HepG2 (cell line): ENCODE measurements at regions of chr6 and their contacts with region 1.

Region 1: GRCh38 chr6:135300576-135300975 is 119.5 kb downstream of the MYB start:
- DNase-seq: no peak
- ATAC-seq: no peak
- H3K4me3 ChIP-seq: no peak overlapping the region
- H3K27ac ChIP-seq: no peak overlapping the region
- H3K4me1 ChIP-seq: no peaks in the 10 kb centered on the region
- H3K27me3 ChIP-seq: no peaks in the 10 kb centered on the region
- CTCF ChIP-seq: no peak
- EP300 ChIP-seq: no peak
- POLR2A ChIP-seq: no peak
- RAD21 ChIP-seq: no peak

Region 2: GRCh38 chr6:134830940-134831339 is 469.6 kb before region 1 on chr6:
- CTCF ChIA-PET with region 1: no interaction called
- POLR2A ChIA-PET with region 1: no interaction called
- in situ Hi-C with region 1: no loop called
- intact Hi-C with region 1: loop called (anchors 5 kb)
- DNase-seq: peak; percentile 13
- ATAC-seq: peak; percentile 81
- H3K4me3 ChIP-seq: no peak overlapping the region
- H3K27ac ChIP-seq: no peak overlapping the region
- H3K4me1 ChIP-seq: peaks cover 16% of the 10 kb centered on the region
- H3K27me3 ChIP-seq: no peaks in the 10 kb centered on the region
- CTCF ChIP-seq: no peak
- EP300 ChIP-seq: no peak
- POLR2A ChIP-seq: no peak
- RAD21 ChIP-seq: no peak

Region 3: DNA sequence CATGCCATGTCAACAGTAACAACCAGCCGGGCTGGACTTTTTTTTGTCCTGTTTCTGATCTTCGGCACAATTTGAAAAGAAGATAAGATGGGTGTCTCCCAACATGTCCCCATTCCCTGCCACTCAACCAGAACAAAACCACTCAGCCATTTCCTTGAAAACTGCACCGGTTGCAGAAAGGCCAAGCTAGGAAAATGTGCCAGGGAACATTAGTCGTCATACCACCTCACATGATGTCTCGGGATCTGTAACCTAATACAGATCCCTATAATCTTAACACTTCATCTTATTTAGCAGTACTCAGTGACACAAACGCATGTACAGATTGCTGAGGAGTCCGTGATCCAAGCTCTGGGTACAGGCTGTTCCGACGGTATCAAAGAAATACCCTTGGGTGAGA is 397.1 kb before region 1 on chr6:
- CTCF ChIA-PET with region 1: no interaction called
- POLR2A ChIA-PET with region 1: no interaction called
- in situ Hi-C with region 1: no loop called
- intact Hi-C with region 1: no loop called
- DNase-seq: no peak
- ATAC-seq: no peak
- H3K4me3 ChIP-seq: no peak overlapping the region
- H3K27ac ChIP-seq: no peak overlapping the region
- H3K4me1 ChIP-seq: no peaks in the 10 kb centered on the region
- H3K27me3 ChIP-seq: no peaks in the 10 kb centered on the region
- CTCF ChIP-seq: no peak
- EP300 ChIP-seq: no peak
- POLR2A ChIP-seq: no peak
- RAD21 ChIP-seq: no peak

Region 4: DNA sequence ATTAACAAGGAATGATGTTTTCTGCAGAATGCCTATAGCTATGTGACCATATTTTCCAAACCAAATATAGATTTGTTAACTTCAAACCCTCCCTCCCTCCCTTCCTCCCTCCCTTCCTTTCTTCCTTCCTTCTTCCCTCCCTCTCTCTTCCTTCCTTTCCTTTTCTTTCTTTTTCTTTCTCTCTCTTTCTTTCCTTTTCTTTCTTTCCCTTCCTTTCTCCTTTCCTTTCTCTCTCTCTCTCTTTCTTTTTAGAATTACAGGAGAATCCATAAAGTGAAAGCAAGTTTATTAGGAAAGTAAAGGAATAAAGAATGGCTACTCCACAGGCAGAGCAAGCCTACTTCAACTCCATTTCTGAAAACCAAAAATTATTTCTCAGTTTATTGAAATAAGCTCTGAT is 44.0 kb after region 1 on chr6:
- CTCF ChIA-PET with region 1: no interaction called
- POLR2A ChIA-PET with region 1: no interaction called
- in situ Hi-C with region 1: no loop called
- intact Hi-C with region 1: no loop called
- DNase-seq: no peak
- ATAC-seq: no peak
- H3K4me3 ChIP-seq: no peak overlapping the region
- H3K27ac ChIP-seq: no peak overlapping the region
- H3K4me1 ChIP-seq: no peaks in the 10 kb centered on the region
- H3K27me3 ChIP-seq: no peaks in the 10 kb centered on the region
- CTCF ChIP-seq: no peak
- EP300 ChIP-seq: no peak
- POLR2A ChIP-seq: no peak
- RAD21 ChIP-seq: no peak

Region 5: DNA sequence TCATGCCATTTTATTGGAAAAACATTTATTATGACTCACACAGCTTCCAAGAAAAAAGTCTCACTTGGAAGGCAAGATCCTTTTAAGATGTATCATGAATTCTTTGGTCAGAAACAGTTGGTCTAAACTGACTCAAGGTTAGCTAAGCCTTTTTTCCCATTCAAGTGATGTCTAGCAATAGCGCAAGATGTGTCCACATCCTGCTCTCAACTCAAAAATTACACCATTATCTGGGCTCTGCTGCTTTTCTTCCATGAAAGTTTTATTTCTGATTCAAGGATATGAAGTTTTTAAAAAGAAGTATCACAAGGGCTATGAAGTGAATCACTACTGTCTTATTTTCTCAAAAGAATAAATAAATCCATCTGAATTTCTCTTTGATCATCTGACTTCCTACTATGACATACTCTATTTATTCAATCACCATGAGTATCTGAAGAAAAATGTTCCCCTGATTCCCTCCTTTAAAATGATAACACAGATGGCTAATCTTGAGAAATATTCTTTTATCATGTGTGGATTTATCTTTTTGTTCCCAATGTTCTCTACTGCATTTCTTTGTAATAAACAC is 57.8 kb after region 1 on chr6:
- CTCF ChIA-PET with region 1: no interaction called
- POLR2A ChIA-PET with region 1: no interaction called
- in situ Hi-C with region 1: no loop called
- intact Hi-C with region 1: no loop called
- DNase-seq: no peak
- ATAC-seq: no peak
- H3K4me3 ChIP-seq: no peak overlapping the region
- H3K27ac ChIP-seq: no peak overlapping the region
- H3K4me1 ChIP-seq: peaks cover 10% of the 10 kb centered on the region
- H3K27me3 ChIP-seq: no peaks in the 10 kb centered on the region
- CTCF ChIP-seq: no peak
- EP300 ChIP-seq: no peak
- POLR2A ChIP-seq: no peak
- RAD21 ChIP-seq: no peak